OCI-LY7 (cell line): ENCODE measurements at regions of chr10 and their contacts with region 1.

Region 1: GRCh38 chr10:43396928-43397624 is 11.9 kb downstream of the HNRNPF start:
- DNase-seq: peak; percentile 94
- H3K4me3 ChIP-seq: peak overlapping the region; percentile 92
- H3K27ac ChIP-seq: peak overlapping the region; percentile 82
- H3K4me1 ChIP-seq: peaks cover 63% of the 10 kb centered on the region
- CTCF ChIP-seq: no peak

Region 2: GRCh38 chr10:43361986-43362839 is 34.9 kb before region 1 on chr10:
- CTCF ChIA-PET with region 1: no interaction called
- POLR2A ChIA-PET with region 1: no interaction called
- intact Hi-C with region 1: no loop called
- DNase-seq: no peak
- H3K4me3 ChIP-seq: no peak overlapping the region
- H3K27ac ChIP-seq: no peak overlapping the region
- H3K4me1 ChIP-seq: no peaks in the 10 kb centered on the region
- CTCF ChIP-seq: no peak

Region 3: DNA sequence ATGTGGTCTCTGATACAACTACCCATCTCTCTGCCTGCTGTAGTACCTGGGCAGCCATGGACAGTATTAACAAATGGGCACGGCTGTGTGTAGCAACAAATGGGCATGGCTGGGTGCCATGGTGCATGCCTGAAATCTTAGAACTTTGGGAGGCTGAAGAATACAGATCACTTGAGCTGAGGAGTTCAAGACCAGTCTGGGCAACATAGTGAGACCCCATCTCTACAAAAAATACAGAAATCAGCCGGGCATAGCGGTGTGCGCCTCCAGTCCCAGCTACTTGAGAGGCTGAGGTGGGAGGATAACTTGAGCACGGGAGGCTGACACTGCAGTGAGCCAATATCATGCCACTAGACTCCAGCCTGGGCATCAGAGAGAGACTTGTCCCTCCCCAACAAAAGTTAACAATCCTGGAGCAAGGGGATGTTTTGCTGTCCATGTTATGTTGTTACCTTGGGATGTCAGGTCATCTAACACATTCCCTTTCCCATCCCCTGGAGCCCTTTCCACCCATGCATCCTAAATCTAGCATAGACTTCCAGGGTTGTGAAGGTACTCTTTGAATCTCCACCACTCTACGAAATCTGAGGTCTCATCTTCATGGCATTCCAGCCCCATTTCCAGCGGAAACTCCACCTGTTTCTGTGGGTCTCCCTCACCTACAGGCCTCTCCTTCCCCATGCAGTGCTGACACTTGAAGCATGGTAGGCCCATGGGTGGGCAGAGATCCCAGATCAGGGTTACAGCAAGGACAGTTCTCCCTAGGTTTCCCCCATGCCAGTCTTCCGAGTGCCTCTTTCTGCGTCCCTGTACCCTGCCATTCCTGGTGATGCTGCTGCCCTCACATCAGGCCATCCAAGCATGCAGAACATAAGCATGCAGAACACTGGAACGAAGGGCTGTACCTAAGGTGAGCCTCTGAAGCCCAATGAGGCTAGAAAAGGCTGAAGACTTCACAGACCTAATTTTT is 12.5 kb before region 1 on chr10:
- CTCF ChIA-PET with region 1: no interaction called
- POLR2A ChIA-PET with region 1: interaction called, 10 read pairs
- intact Hi-C with region 1: no loop called
- DNase-seq: no peak
- H3K4me3 ChIP-seq: no peak overlapping the region
- H3K27ac ChIP-seq: no peak overlapping the region
- H3K4me1 ChIP-seq: no peaks in the 10 kb centered on the region
- CTCF ChIP-seq: no peak